ENCODE measurements at regions of chr12 and their contacts with region 1.

Region 1: DNA sequence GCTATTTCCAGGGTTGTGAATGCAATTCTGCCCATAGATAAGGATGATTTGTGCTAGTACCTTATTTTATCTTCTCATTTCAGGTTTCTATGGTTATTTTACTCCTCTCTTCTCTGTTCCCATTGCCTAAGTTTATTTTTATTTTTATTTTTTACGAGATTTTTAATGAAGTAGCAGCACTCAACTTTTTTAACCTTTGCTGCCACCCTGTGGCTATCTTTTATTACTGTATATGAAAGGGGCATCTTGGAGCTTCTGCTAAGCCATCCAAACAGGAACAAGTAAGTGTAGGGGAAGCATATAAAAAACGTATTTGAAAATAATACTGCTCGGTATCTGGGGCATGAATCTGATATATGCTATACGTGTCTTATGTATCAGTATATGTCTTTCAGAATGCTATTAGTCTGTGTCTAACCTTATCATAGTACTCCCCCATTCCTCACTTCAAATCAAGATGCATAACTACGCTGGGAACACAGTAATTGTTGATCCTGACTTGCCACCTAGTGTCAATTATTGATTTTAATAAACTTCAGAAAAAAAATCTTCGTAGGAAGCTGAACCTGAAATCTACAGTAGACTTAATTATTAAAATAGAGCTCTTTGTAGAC is 60.3 kb downstream of the KLRG1 start:
- DNase-seq: no peak
- ATAC-seq: peak; percentile 80
- H3K4me3 ChIP-seq: no peak overlapping the region
- H3K27ac ChIP-seq: no peak overlapping the region
- H3K4me1 ChIP-seq: no peaks in the 10 kb centered on the region
- H3K27me3 ChIP-seq: no peaks in the 10 kb centered on the region; the same call in none of the 2 replicates
- CTCF ChIP-seq: peak; percentile 50; the same call in 1 of the 2 replicates

Region 2: GRCh38 chr12:8544295-8544694 is 505.3 kb before region 1 on chr12:
- CTCF ChIA-PET with region 1: no interaction called
- POLR2A ChIA-PET with region 1: no interaction called
- in situ Hi-C with region 1: no loop called
- intact Hi-C with region 1: loop called (anchors 10 kb)
- DNase-seq: peak; percentile 35
- ATAC-seq: peak; percentile 79
- H3K4me3 ChIP-seq: no peak overlapping the region
- H3K27ac ChIP-seq: no peak overlapping the region
- H3K4me1 ChIP-seq: no peaks in the 10 kb centered on the region
- H3K27me3 ChIP-seq: no peaks in the 10 kb centered on the region; the same call in none of the 2 replicates
- CTCF ChIP-seq: peak; percentile 90

Region 3: DNA sequence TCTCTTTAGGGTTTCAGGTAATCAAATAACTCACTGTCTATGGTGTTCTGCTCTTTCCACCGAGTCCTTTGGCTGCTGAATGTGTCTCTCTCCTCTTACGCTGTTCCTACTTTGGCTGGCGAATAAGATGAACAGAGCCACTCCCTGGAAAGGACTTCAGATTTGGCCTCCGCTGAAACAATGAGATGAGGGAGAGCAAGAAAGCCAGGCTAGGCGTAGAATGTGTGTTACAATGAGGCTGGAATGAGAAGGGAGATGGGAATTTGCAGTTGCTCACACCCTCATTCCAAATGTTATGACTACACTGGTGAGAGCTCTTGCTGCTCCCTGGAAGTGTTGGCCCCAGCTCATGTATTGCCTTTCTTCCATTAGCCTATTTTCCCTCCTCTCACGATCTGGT is 387.0 kb before region 1 on chr12 and contains the start of gene MFAP5:
- CTCF ChIA-PET with region 1: interaction called, 5 read pairs
- POLR2A ChIA-PET with region 1: no interaction called
- in situ Hi-C with region 1: no loop called
- intact Hi-C with region 1: loop called (anchors 10 kb)
- DNase-seq: no peak
- ATAC-seq: no peak
- H3K4me3 ChIP-seq: no peak within 1 kb of the TSS
- H3K27ac ChIP-seq: no peak within 1 kb of the TSS
- H3K4me1 ChIP-seq: no peaks in the 10 kb centered on the region
- H3K27me3 ChIP-seq: no peaks in the 10 kb centered on the region; the same call in 1 of the 2 replicates
- CTCF ChIP-seq: no peak
- total RNA-seq, gene MFAP5: not detected

Region 4: DNA sequence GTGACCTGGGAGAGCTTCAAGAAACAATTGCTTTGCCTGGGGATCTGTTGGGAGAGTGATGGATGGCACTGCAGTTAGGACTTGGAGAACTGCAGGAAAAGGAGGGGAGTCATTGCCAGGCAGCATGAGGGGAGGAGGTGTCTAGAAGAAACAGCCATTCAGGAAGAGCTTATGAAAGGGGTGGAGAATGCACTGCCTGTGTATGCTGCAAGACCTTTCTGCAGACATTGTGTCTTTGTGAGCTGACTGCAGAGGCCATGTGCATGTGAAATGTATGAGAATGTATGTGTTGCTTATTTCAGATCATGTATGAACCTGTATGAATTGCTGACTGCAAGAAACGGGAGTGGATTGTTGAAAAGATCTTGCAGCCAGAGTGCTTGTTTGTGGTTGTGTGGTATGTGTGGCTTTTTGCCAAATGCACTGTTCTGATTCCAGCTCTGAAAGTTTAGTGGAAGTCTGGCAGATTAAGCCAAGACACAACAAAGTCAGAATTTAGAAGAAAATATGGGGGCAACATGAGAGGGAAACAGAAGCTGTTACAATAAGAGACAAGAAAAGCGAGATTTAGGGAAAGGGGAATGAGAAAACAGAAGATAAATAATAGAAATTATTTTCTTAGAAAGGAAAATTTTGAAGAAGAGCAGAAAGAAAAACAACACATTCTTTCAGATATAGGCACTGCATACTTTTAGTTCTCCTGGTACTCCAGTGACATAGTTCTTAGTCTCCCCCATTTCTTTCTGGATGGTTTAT is 361.6 kb before region 1 on chr12:
- CTCF ChIA-PET with region 1: no interaction called
- POLR2A ChIA-PET with region 1: no interaction called
- in situ Hi-C with region 1: no loop called
- intact Hi-C with region 1: loop called (anchors 10 kb)
- DNase-seq: no peak
- ATAC-seq: 0 out of 2 replicates have a peak, but pooled peaks have one; percentile 65
- H3K4me3 ChIP-seq: no peak overlapping the region
- H3K27ac ChIP-seq: no peak overlapping the region
- H3K4me1 ChIP-seq: no peaks in the 10 kb centered on the region
- H3K27me3 ChIP-seq: no peaks in the 10 kb centered on the region
- CTCF ChIP-seq: no peak

Measured in Panc1 (cell line).